CD8-positive, alpha-beta T cell (primary cell): ENCODE measurements at regions of chr19 and their contacts with region 1.

Region 1: GRCh38 chr19:39435499-39436349 is at the start of gene RPS16:
- DNase-seq: peak; percentile 97 to 99 (median 99)
- ATAC-seq: peak; percentile 89
- H3K4me3 ChIP-seq: peak within 1 kb of the TSS; percentile 88
- H3K4me3 Mint-ChIP-seq: peak within 1 kb of the TSS; percentile 100
- H3K27ac ChIP-seq: peak within 1 kb of the TSS; percentile 85 to 92
- H3K27ac Mint-ChIP-seq: peak within 1 kb of the TSS; percentile 99
- H3K4me1 ChIP-seq: peaks cover 25% of the 10 kb centered on the region
- H3K4me1 Mint-ChIP-seq: peaks cover 47% of the 10 kb centered on the region
- H3K27me3 ChIP-seq: no peaks in the 10 kb centered on the region
- H3K27me3 Mint-ChIP-seq: no peaks in the 10 kb centered on the region
- CTCF ChIP-seq: no peak
- total RNA-seq, gene RPS16: 4,439 to 4,447 TPM

Region 2: DNA sequence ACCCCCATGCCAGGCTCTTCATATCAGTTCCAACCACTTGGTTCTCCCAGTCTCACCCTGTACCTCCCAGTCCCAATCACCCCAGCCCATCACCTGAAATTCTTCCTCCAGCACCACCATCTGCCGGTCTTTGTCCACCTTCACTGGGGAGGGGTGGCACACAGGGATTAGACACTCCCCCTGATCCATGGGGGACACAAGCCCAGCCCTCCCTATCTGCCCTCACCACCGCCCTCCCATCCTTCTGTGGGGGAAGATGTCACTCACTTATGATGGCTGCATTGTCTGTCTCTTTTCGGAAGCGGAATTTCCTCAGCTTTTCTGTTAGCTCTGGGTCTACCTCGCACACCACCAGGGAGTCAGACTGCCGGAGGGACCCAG is 100.6 kb before region 1 on chr19:
- CTCF ChIA-PET with region 1: no interaction called
- POLR2A ChIA-PET with region 1: interaction called, 15 read pairs
- intact Hi-C with region 1: no loop called
- DNase-seq: peak in 6 of 9 experiments; percentile 10 to 63 (median 38)
- ATAC-seq: peak; percentile 39
- H3K4me3 ChIP-seq: peak overlapping the region; percentile 68 to 96
- H3K4me3 Mint-ChIP-seq: peak overlapping the region; percentile 97
- H3K27ac ChIP-seq: peak overlapping the region; percentile 83 to 96
- H3K27ac Mint-ChIP-seq: peak overlapping the region; percentile 99
- H3K4me1 ChIP-seq: peaks cover 52% of the 10 kb centered on the region
- H3K4me1 Mint-ChIP-seq: peaks cover 60% of the 10 kb centered on the region
- H3K27me3 ChIP-seq: no peaks in the 10 kb centered on the region
- H3K27me3 Mint-ChIP-seq: no peaks in the 10 kb centered on the region
- CTCF ChIP-seq: no peak

Region 3: DNA sequence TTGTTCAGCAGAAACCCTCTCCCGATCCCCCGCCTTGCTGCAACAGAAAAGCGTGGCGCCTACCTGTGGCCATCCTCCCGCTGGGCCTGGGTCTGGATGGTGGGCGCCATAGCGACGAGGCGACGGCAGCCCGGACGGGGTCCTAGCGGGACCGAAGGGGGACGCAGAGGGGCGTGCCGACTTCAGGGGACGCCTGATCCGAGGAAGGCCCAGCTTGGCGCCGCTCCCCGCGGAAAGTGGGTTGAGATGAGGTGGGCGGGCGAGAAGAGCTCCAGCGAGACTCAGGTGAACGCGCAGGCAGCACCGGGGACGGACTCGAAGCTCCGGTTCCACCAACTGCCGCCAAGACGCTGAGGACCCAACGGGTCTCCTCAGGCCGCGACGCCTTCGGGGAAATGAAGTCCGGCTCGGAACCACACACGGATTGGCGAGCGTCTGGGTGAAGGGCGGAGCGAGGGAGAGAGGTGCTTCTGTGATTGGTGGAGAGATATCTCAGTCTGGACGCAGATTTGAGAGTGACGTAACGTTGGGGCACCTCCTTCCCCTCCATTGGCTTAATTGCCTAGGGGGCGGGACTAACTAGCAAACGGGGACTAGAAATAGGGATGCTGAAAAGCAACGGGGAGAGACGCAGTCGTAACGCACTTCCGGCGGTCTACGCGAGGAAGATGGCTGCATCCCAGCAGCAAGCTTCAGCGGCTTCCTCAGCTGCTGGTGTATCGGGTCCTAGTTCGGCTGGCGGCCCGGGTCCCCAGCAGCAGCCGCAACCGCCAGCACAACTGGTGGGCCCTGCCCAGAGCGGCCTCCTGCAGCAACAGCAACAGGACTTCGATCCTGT is 44.8 kb before region 1 on chr19 and contains the starts of genes MED29 and PAF1:
- CTCF ChIA-PET with region 1: no interaction called
- POLR2A ChIA-PET with region 1: interaction called, 41 read pairs
- intact Hi-C with region 1: loop called (anchors 1 kb)
- DNase-seq: peak; percentile 89 to 100 (median 94)
- ATAC-seq: peak; percentile 87
- H3K4me3 ChIP-seq: peak within 1 kb of the TSS; percentile 86 to 95
- H3K4me3 Mint-ChIP-seq: peak within 1 kb of the TSS; percentile 96
- H3K27ac ChIP-seq: peak within 1 kb of the TSS; percentile 99
- H3K27ac Mint-ChIP-seq: peak within 1 kb of the TSS; percentile 100
- H3K4me1 ChIP-seq: peaks cover 19% of the 10 kb centered on the region
- H3K4me1 Mint-ChIP-seq: peaks cover 37% of the 10 kb centered on the region
- H3K27me3 ChIP-seq: no peaks in the 10 kb centered on the region
- H3K27me3 Mint-ChIP-seq: no peaks in the 10 kb centered on the region
- CTCF ChIP-seq: no peak
- total RNA-seq, gene MED29: 45.9 to 55.1 TPM
- total RNA-seq, gene PAF1: 109 to 117 TPM

Region 4: GRCh38 chr19:39406656-39407393 is 28.9 kb before region 1 on chr19 and contains the start of gene ZFP36:
- CTCF ChIA-PET with region 1: interaction called, 3 read pairs
- POLR2A ChIA-PET with region 1: interaction called, 32 read pairs
- intact Hi-C with region 1: loop called (anchors 1 kb)
- DNase-seq: peak; percentile 85 to 95 (median 89)
- ATAC-seq: peak; percentile 20
- H3K4me3 ChIP-seq: peak within 1 kb of the TSS; percentile 95 to 100
- H3K4me3 Mint-ChIP-seq: peak within 1 kb of the TSS; percentile 89
- H3K27ac ChIP-seq: peak within 1 kb of the TSS; percentile 94 to 100
- H3K27ac Mint-ChIP-seq: peak within 1 kb of the TSS; percentile 98
- H3K4me1 ChIP-seq: peaks cover 57% of the 10 kb centered on the region
- H3K4me1 Mint-ChIP-seq: peaks cover 52% of the 10 kb centered on the region
- H3K27me3 ChIP-seq: no peaks in the 10 kb centered on the region
- H3K27me3 Mint-ChIP-seq: no peaks in the 10 kb centered on the region
- CTCF ChIP-seq: no peak
- total RNA-seq, gene ZFP36: 1,672 to 1,779 TPM

Region 5: DNA sequence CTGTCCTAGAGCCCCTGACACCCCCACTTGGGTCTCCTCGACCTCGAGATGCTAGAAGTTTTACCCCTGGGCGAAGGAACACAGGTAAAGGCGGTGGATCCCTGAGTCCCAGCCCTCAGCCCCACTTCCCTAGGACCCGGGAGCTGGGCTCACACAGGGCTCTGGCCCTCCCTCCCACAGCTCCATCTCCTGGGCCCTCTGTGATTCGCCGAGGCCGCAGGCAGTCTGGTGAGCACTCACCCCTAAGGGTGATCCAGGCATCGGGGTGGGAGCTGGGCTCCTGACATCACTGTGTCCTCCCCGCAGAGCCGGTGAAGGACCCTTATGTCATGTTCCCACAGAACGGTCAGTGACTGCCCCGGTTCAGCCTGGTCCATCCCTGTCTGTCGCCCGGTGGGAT is 15.0 kb before region 1 on chr19:
- CTCF ChIA-PET with region 1: interaction called, 3 read pairs
- POLR2A ChIA-PET with region 1: interaction called, 26 read pairs
- intact Hi-C with region 1: no loop called
- DNase-seq: no peak
- ATAC-seq: no peak
- H3K4me3 ChIP-seq: no peak overlapping the region
- H3K4me3 Mint-ChIP-seq: no peak overlapping the region
- H3K27ac ChIP-seq: no peak overlapping the region
- H3K27ac Mint-ChIP-seq: no peak overlapping the region
- H3K4me1 ChIP-seq: no peaks in the 10 kb centered on the region
- H3K4me1 Mint-ChIP-seq: no peaks in the 10 kb centered on the region
- H3K27me3 ChIP-seq: no peaks in the 10 kb centered on the region
- H3K27me3 Mint-ChIP-seq: no peaks in the 10 kb centered on the region
- CTCF ChIP-seq: no peak

Region 6: DNA sequence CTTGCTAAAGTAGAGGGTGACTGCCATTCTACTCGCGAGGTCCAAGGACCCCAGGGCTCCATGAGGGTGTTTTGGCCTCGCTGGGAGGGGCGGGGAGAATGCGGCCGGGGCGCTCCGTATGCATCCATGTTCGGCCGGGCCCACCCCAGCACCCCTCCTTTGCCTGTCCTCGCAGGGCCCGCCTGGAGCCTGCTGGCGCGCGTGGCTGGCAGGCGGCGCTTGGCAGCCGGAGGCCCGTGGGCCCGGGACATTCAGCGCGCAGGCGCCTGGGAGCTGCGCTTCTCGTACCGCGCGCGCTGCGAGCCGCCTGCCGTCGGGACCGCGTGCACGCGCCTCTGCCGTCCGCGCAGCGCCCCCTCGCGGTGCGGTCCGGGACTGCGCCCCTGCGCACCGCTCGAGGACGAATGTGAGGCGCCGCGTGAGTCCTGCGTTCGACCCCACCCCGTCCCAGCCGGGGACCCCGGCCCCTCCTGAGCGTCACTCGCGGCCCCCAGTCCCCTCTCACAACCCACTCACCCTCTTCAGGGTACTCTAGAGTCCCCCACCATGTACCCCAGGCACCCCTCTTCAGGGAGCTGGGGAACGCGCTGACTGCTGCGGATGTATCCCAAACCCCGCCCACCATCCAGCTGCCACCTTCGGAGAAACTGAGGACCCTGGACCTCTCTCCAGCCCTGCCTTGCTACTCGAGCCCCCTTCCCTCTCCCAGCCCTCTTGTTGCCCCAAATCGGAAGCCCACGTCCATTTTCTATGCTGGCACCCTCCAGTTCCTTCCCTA is 67.1 kb after region 1 on chr19:
- CTCF ChIA-PET with region 1: interaction called, 3 read pairs
- POLR2A ChIA-PET with region 1: interaction called, 3 read pairs
- intact Hi-C with region 1: loop called in 1 of 2 experiments (anchors 2 kb)
- DNase-seq: peak; percentile 51 to 91 (median 78)
- ATAC-seq: peak; percentile 79
- H3K4me3 ChIP-seq: no peak overlapping the region
- H3K4me3 Mint-ChIP-seq: no peak overlapping the region
- H3K27ac ChIP-seq: no peak overlapping the region
- H3K27ac Mint-ChIP-seq: no peak overlapping the region
- H3K4me1 ChIP-seq: peaks cover 27% of the 10 kb centered on the region
- H3K4me1 Mint-ChIP-seq: peaks cover 26% of the 10 kb centered on the region
- H3K27me3 ChIP-seq: peaks cover 23 to 50% of the 10 kb centered on the region in 2 experiments
- H3K27me3 Mint-ChIP-seq: peaks cover 57% of the 10 kb centered on the region
- CTCF ChIP-seq: peak; percentile 89